ENCODE measurements at regions of chr19 and their contacts with region 1.

Region 1: DNA sequence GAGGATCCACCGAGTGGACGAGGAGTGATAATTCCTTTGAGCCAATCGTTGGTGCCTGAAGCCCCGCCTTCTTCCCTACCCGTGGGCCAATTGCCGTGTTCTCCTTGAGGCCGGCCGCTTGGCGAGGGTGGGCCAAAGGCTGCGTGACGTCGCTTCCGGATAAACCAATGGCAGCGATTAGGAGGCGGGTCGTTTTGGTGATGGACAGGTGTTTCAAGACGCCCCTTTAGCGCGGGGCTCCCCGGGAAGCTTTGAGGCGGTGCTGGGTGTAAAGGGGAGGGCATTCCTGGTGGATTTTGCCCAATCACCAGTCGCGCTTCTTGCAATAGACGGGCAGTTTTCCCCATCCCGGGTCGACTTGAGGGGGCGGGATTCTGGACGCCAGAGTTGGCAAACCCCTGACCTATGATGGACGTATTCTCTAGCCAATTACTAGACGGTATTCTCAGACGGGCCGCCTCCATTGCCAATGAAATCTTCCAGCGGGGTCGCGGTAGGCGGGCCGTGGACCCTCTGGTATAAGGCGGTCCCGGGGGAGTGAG is 310 bp upstream of the PRMT1 start:
- DNase-seq: peak; percentile 100
- H3K4me3 Mint-ChIP-seq: peak overlapping the region; percentile 91
- H3K27ac Mint-ChIP-seq: peak overlapping the region; percentile 99
- H3K4me1 Mint-ChIP-seq: peaks cover 29% of the 10 kb centered on the region
- H3K27me3 Mint-ChIP-seq: no peaks in the 10 kb centered on the region

Region 2: DNA sequence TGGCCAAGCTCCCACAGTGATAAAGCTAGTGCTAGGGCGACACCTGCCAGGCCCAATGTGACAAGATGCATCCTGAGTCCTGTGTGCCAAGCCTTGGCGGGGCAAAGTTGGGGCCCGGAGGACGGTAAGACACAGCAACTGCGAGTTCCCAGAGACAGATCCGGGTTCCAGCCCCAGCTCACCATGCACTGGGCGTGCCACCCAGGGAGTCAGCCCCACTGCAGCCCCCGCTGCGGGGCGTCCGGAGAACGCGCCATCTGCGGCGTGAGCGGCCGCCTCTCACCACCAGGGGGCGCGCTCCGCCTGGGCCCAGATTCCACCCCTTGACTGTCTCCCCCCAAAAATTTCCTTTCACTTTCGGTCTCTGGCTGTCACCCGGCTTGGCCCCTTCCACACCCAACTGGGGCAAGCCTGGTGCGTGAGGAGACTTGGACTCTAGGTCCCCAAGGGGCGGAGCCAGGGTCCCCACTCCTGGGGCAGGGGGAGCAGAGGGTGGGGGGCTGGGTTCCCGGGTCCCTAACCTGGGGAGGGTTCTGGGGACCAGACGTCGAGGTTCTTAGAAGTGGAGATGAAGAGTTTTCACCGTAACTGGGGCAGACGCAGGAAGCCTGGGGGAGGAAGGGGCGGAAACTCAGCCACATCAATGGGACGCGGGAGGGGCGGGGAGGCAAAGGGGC is 202.8 kb before region 1 on chr19 and contains the start of gene FLT3LG:
- CTCF ChIA-PET with region 1: interaction called, 4 read pairs
- intact Hi-C with region 1: loop called (anchors 1 kb)
- DNase-seq: peak; percentile 89
- H3K4me3 Mint-ChIP-seq: peak within 1 kb of the TSS; percentile 88
- H3K27ac Mint-ChIP-seq: peak within 1 kb of the TSS; percentile 95
- H3K4me1 Mint-ChIP-seq: peaks cover 65% of the 10 kb centered on the region
- H3K27me3 Mint-ChIP-seq: no peaks in the 10 kb centered on the region
- total RNA-seq, gene FLT3LG: 23.9 to 28.4 TPM

Region 3: DNA sequence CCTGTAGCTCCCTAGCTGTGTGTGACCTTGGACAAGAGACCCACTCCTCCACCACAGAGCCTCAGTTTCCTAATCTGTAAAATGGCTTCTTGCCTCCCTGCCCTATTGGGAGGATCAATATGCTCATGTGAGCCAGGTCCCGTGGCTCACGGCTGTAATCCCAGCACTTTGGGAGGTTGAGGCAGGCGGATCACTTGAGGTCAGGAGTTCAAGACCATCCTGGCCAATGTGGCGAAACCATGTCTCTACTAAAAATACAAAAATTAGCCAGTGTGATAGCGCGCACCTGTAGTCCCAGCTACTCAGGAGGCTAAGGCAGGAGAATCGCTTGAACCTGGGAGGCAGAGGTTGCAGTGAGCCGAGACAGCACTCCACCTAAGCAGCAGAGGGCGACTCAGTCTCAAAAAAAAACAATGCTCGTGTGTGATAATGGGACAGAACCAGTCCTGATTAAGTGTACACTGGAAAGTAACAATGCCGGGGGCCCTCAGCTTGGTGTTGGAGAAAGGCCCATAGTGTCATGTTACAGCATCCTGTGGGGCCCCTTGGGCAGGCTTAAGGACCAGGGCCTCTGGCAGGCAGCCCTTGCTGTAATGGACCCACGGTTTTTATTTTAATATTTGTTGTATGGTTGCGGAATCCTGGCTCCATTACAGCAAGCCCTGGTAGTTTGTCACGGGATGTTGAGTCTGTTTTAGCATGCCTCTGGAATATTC is 173.7 kb before region 1 on chr19:
- CTCF ChIA-PET with region 1: interaction called, 7 read pairs
- intact Hi-C with region 1: loop called (anchors 1 kb)
- DNase-seq: peak; percentile 63
- H3K4me3 Mint-ChIP-seq: no peak overlapping the region
- H3K27ac Mint-ChIP-seq: no peak overlapping the region
- H3K4me1 Mint-ChIP-seq: peaks cover 47% of the 10 kb centered on the region
- H3K27me3 Mint-ChIP-seq: no peaks in the 10 kb centered on the region

Region 4: GRCh38 chr19:49580264-49581006 is 96.3 kb before region 1 on chr19 and contains the start of gene NOSIP:
- CTCF ChIA-PET with region 1: interaction called, 4 read pairs
- intact Hi-C with region 1: loop called (anchors 1 kb)
- DNase-seq: peak; percentile 98
- H3K4me3 Mint-ChIP-seq: peak within 1 kb of the TSS; percentile 85
- H3K27ac Mint-ChIP-seq: peak within 1 kb of the TSS; percentile 82
- H3K4me1 Mint-ChIP-seq: peaks cover 36% of the 10 kb centered on the region
- H3K27me3 Mint-ChIP-seq: no peaks in the 10 kb centered on the region
- total RNA-seq, gene NOSIP: 76.4 to 77.4 TPM

Region 5: GRCh38 chr19:49615861-49616260 is 60.9 kb before region 1 on chr19:
- CTCF ChIA-PET with region 1: interaction called, 3 read pairs
- intact Hi-C with region 1: loop called (anchors 2 kb)
- DNase-seq: no peak
- H3K4me3 Mint-ChIP-seq: no peak overlapping the region
- H3K27ac Mint-ChIP-seq: no peak overlapping the region
- H3K4me1 Mint-ChIP-seq: peaks cover 13% of the 10 kb centered on the region
- H3K27me3 Mint-ChIP-seq: no peaks in the 10 kb centered on the region

Region 6: GRCh38 chr19:49877020-49877878 is 200.5 kb after region 1 on chr19 and contains the starts of genes AKT1S1 and TBC1D17:
- CTCF ChIA-PET with region 1: no interaction called
- intact Hi-C with region 1: loop called (anchors 2 kb)
- DNase-seq: peak; percentile 99
- H3K4me3 Mint-ChIP-seq: no peak within 1 kb of the TSS
- H3K27ac Mint-ChIP-seq: no peak within 1 kb of the TSS
- H3K4me1 Mint-ChIP-seq: peaks cover 28% of the 10 kb centered on the region
- H3K27me3 Mint-ChIP-seq: no peaks in the 10 kb centered on the region
- total RNA-seq, gene AKT1S1: 13.3 to 14.2 TPM
- total RNA-seq, gene TBC1D17: 29.8 to 32.4 TPM